Panc1 (cell line): ENCODE measurements at regions of chr6 and their contacts with region 1.

Region 1: GRCh38 chr6:49849213-49849907 is 17.0 kb downstream of the CRISP1 start:
- DNase-seq: peak; percentile 27
- ATAC-seq: peak; percentile 72
- H3K4me3 ChIP-seq: no peak overlapping the region
- H3K27ac ChIP-seq: no peak overlapping the region
- H3K4me1 ChIP-seq: no peaks in the 10 kb centered on the region
- H3K27me3 ChIP-seq: no peaks in the 10 kb centered on the region
- CTCF ChIP-seq: peak; percentile 50

Region 2: GRCh38 chr6:49453221-49453620 is 396.1 kb before region 1 on chr6:
- CTCF ChIA-PET with region 1: no interaction called
- POLR2A ChIA-PET with region 1: no interaction called
- in situ Hi-C with region 1: no loop called
- intact Hi-C with region 1: loop called (anchors 5 kb)
- DNase-seq: no peak
- ATAC-seq: no peak
- H3K4me3 ChIP-seq: no peak overlapping the region
- H3K27ac ChIP-seq: no peak overlapping the region
- H3K4me1 ChIP-seq: no peaks in the 10 kb centered on the region
- H3K27me3 ChIP-seq: no peaks in the 10 kb centered on the region
- CTCF ChIP-seq: peak; percentile 57

Region 3: GRCh38 chr6:49531774-49532569 is 317.4 kb before region 1 on chr6:
- CTCF ChIA-PET with region 1: interaction called, 6 read pairs
- POLR2A ChIA-PET with region 1: no interaction called
- in situ Hi-C with region 1: no loop called
- intact Hi-C with region 1: loop called (anchors 2 kb)
- DNase-seq: no peak
- ATAC-seq: peak; percentile 85
- H3K4me3 ChIP-seq: no peak overlapping the region
- H3K27ac ChIP-seq: no peak overlapping the region
- H3K4me1 ChIP-seq: no peaks in the 10 kb centered on the region
- H3K27me3 ChIP-seq: no peaks in the 10 kb centered on the region
- CTCF ChIP-seq: peak; percentile 77

Region 4: GRCh38 chr6:49625140-49625539 is 224.2 kb before region 1 on chr6:
- CTCF ChIA-PET with region 1: interaction called, 3 read pairs
- POLR2A ChIA-PET with region 1: no interaction called
- in situ Hi-C with region 1: loop called (anchors 25 kb)
- intact Hi-C with region 1: loop called (anchors 1 kb)
- DNase-seq: no peak
- ATAC-seq: no peak
- H3K4me3 ChIP-seq: no peak overlapping the region
- H3K27ac ChIP-seq: no peak overlapping the region
- H3K4me1 ChIP-seq: no peaks in the 10 kb centered on the region
- H3K27me3 ChIP-seq: no peaks in the 10 kb centered on the region
- CTCF ChIP-seq: no peak

Region 5: GRCh38 chr6:49646130-49646824 is 203.1 kb before region 1 on chr6:
- CTCF ChIA-PET with region 1: no interaction called
- POLR2A ChIA-PET with region 1: no interaction called
- in situ Hi-C with region 1: loop called (anchors 25 kb)
- intact Hi-C with region 1: no loop called
- DNase-seq: no peak
- ATAC-seq: no peak
- H3K4me3 ChIP-seq: no peak overlapping the region
- H3K27ac ChIP-seq: no peak overlapping the region
- H3K4me1 ChIP-seq: no peaks in the 10 kb centered on the region
- H3K27me3 ChIP-seq: no peaks in the 10 kb centered on the region
- CTCF ChIP-seq: no peak